B cell (primary cell): ENCODE measurements at regions of chr3 and their contacts with region 1.

Region 1: GRCh38 chr3:23761440-23761896 is 44.3 kb upstream of the UBE2E1 start:
- DNase-seq: peak; percentile 37
- ATAC-seq: no peak
- H3K4me3 ChIP-seq: no peak overlapping the region
- H3K4me3 Mint-ChIP-seq: no peak overlapping the region
- H3K27ac ChIP-seq: no peak overlapping the region
- H3K27ac Mint-ChIP-seq: peak overlapping the region; percentile 53
- H3K4me1 ChIP-seq: peaks cover 31 to 33% of the 10 kb centered on the region in 2 donors
- H3K4me1 Mint-ChIP-seq: peaks cover 33% of the 10 kb centered on the region
- H3K27me3 ChIP-seq: no peaks in the 10 kb centered on the region
- H3K27me3 Mint-ChIP-seq: no peaks in the 10 kb centered on the region
- CTCF ChIP-seq: no peak

Region 2: GRCh38 chr3:23743141-23743784 is 18.2 kb before region 1 on chr3:
- CTCF ChIA-PET with region 1: no interaction called
- POLR2A ChIA-PET with region 1: interaction called, 11 read pairs
- intact Hi-C with region 1: no loop called
- DNase-seq: no peak
- ATAC-seq: no peak
- H3K4me3 ChIP-seq: no peak overlapping the region
- H3K4me3 Mint-ChIP-seq: no peak overlapping the region
- H3K27ac ChIP-seq: no peak overlapping the region
- H3K27ac Mint-ChIP-seq: no peak overlapping the region
- H3K4me1 ChIP-seq: no peaks in the 10 kb centered on the region
- H3K4me1 Mint-ChIP-seq: peaks cover 4% of the 10 kb centered on the region
- H3K27me3 ChIP-seq: no peaks in the 10 kb centered on the region
- H3K27me3 Mint-ChIP-seq: no peaks in the 10 kb centered on the region
- CTCF ChIP-seq: no peak